ENCODE measurements at regions of chr6 and their contacts with region 1.

Region 1: DNA sequence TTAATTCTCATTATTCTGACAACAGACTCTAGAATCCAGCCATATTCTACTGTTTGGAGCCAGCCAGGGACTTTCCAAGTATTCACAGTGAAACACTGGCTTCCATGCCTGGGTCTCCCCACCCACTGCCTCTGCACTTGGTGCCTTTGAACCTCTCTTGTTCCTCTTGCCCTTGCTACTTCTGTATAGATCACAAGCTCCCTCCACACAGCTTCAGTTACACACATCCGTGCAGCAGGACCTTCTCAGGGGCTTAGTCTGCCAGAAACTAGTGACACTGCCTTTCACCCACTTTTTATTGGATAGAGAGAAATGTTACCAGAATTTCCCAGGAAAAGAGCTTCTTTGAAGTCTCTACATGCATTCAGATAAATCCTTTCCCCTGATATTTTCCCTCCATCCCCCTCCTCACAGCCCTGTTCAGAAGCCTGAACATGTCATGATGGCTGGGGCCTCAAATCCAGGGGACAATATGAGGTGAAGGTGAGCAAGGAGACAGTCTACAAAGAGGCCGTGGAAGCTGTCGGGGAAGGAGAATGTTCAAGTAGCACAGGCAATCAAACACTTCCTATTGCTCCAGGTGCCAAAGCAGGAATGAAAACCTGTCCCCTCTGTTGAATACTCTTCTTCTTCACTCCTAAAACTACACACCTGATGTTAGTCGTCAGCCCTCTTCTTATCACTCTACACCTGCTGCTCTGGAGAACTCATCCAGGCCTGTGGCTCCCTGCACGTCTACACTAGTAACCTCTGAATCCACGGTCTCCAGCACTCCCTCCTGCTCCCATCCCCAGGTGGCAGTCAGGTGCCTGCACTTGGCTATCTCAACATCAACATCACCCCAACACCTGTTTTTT is 20.2 kb upstream of the HLA-DOA start:
- DNase-seq: peak; percentile 94
- ATAC-seq: peak; percentile 89
- H3K4me3 ChIP-seq: peak overlapping the region; percentile 49
- H3K27ac ChIP-seq: peak overlapping the region; percentile 100
- H3K4me1 ChIP-seq: peaks cover 36% of the 10 kb centered on the region
- H3K27me3 ChIP-seq: no peaks in the 10 kb centered on the region
- CTCF ChIP-seq: peak in 2 of 3 experiments; percentile 4 to 22; a peak in 1 of 6 replicates
- EP300 ChIP-seq: peak; percentile 86 to 88
- POLR2A ChIP-seq: peak; percentile 83
- RAD21 ChIP-seq: peak; percentile 31; the same call in 1 of the 2 replicates

Region 2: GRCh38 chr6:33008944-33009861 is 20.4 kb before region 1 on chr6 and contains the start of gene HLA-DOA:
- CTCF ChIA-PET with region 1: interaction called, 165 read pairs
- POLR2A ChIA-PET with region 1: interaction called, 120 read pairs
- RAD21 ChIA-PET with region 1: interaction called, 132 read pairs
- SMC1A ChIA-PET with region 1: interaction called, 157 read pairs
- in situ Hi-C with region 1: no loop called
- intact Hi-C with region 1: no loop called
- DNase-seq: peak; percentile 75
- ATAC-seq: peak; percentile 98
- H3K4me3 ChIP-seq: peak within 1 kb of the TSS; percentile 100
- H3K27ac ChIP-seq: peak within 1 kb of the TSS; percentile 75
- H3K4me1 ChIP-seq: peaks cover 15% of the 10 kb centered on the region
- H3K27me3 ChIP-seq: no peaks in the 10 kb centered on the region
- CTCF ChIP-seq: no peak
- EP300 ChIP-seq: no peak
- POLR2A ChIP-seq: peak; percentile 93
- RAD21 ChIP-seq: no peak
- polyA plus RNA-seq, gene HLA-DOA: 8.8 to 21.1 TPM

Region 3: GRCh38 chr6:33040157-33040556 is 10.6 kb after region 1 on chr6:
- CTCF ChIA-PET with region 1: interaction called, 4 read pairs
- POLR2A ChIA-PET with region 1: interaction called, 12 read pairs
- RAD21 ChIA-PET with region 1: interaction called, 5 read pairs
- SMC1A ChIA-PET with region 1: interaction called, 6 read pairs
- in situ Hi-C with region 1: no loop called
- intact Hi-C with region 1: no loop called
- DNase-seq: peak; percentile 41
- ATAC-seq: peak; percentile 91
- H3K4me3 ChIP-seq: no peak overlapping the region
- H3K27ac ChIP-seq: no peak overlapping the region
- H3K4me1 ChIP-seq: peaks cover 7% of the 10 kb centered on the region; the same call in 1 of the 2 replicates
- H3K27me3 ChIP-seq: no peaks in the 10 kb centered on the region
- CTCF ChIP-seq: no peak
- EP300 ChIP-seq: no peak
- POLR2A ChIP-seq: no peak
- RAD21 ChIP-seq: no peak

Region 4: DNA sequence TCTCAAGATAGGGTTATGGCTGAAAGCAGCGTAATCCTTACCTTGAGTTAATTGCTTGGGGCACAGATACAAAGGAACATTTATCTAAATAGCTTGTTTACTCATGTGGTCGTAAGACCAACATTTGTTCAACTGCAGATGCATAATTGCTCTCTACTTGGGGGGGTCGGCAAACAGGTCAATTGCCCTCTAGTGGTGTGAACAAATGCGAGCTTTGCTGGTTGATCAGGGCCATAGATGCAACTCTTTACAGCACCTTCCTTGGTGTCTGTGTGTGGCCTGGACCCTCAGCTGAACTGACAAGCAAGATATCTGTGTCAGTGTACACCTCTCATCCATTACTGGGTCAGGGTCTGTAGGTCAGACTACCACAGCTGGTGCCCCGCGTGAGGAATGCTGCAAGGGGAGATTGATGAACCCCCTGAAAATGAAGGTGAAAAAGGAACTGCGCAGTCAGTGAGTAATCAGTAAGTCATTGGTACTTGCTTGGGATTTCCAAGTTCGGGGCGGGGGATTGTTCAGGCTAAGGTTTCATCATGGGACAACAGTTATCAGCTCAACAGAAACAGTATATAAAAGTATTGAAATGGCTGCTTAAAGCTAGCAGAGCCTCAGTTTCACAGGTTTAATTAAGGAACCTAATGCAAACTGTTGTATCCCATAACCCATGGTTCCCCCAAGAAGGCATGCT is 19.9 kb after region 1 on chr6:
- CTCF ChIA-PET with region 1: interaction called, 61 read pairs
- POLR2A ChIA-PET with region 1: interaction called, 16 read pairs
- RAD21 ChIA-PET with region 1: interaction called, 14 read pairs
- SMC1A ChIA-PET with region 1: interaction called, 44 read pairs
- in situ Hi-C with region 1: no loop called
- intact Hi-C with region 1: no loop called
- DNase-seq: no peak
- ATAC-seq: peak; percentile 85
- H3K4me3 ChIP-seq: no peak overlapping the region
- H3K27ac ChIP-seq: no peak overlapping the region
- H3K4me1 ChIP-seq: no peaks in the 10 kb centered on the region
- H3K27me3 ChIP-seq: no peaks in the 10 kb centered on the region
- CTCF ChIP-seq: peak; percentile 23 to 54 (median 53)
- EP300 ChIP-seq: no peak
- POLR2A ChIP-seq: no peak
- RAD21 ChIP-seq: peak; percentile 43; the same call in 1 of the 2 replicates

Region 5: GRCh38 chr6:33061987-33062386 is 32.4 kb after region 1 on chr6:
- CTCF ChIA-PET with region 1: interaction called, 4 read pairs
- POLR2A ChIA-PET with region 1: interaction called, 23 read pairs
- RAD21 ChIA-PET with region 1: interaction called, 9 read pairs
- SMC1A ChIA-PET with region 1: interaction called, 5 read pairs
- in situ Hi-C with region 1: no loop called
- intact Hi-C with region 1: no loop called
- DNase-seq: peak; percentile 62
- ATAC-seq: peak; percentile 94
- H3K4me3 ChIP-seq: no peak overlapping the region
- H3K27ac ChIP-seq: peak overlapping the region; percentile 66
- H3K4me1 ChIP-seq: peaks cover 13% of the 10 kb centered on the region
- H3K27me3 ChIP-seq: no peaks in the 10 kb centered on the region
- CTCF ChIP-seq: no peak
- EP300 ChIP-seq: peak in 1 of 2 experiments; percentile 46; a peak in 1 of 4 replicates
- POLR2A ChIP-seq: no peak
- RAD21 ChIP-seq: no peak

Region 6: DNA sequence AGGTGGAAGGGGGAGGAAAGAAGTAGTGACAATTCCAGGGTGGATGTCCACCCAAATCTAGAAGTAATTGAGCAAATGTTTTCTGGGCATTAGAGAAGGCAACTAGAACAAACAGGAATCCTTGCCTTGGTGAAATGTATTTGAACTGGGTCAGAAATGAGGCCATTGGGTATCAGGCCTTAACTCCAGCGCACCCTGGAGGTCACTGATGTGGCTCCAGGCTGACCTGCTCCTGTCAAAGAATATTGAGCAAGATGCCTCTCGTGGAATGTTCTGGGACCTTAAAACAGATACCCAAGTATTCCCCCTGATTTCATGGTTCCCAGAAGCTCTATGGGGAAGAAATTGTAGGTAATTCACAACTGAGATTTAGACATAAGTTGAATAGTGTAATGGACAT is 53.1 kb after region 1 on chr6:
- CTCF ChIA-PET with region 1: interaction called, 8 read pairs
- POLR2A ChIA-PET with region 1: interaction called, 25 read pairs
- RAD21 ChIA-PET with region 1: interaction called, 6 read pairs
- SMC1A ChIA-PET with region 1: interaction called, 17 read pairs
- in situ Hi-C with region 1: no loop called
- intact Hi-C with region 1: no loop called
- DNase-seq: no peak
- ATAC-seq: peak; percentile 72
- H3K4me3 ChIP-seq: no peak overlapping the region
- H3K27ac ChIP-seq: 0 out of 2 replicates have a peak overlapping the region, but pooled peaks have one; percentile 35
- H3K4me1 ChIP-seq: peaks cover 21% of the 10 kb centered on the region
- H3K27me3 ChIP-seq: no peaks in the 10 kb centered on the region
- CTCF ChIP-seq: peak; percentile 70 to 73 (median 72)
- EP300 ChIP-seq: no peak
- POLR2A ChIP-seq: no peak
- RAD21 ChIP-seq: peak; percentile 78

Region 7: DNA sequence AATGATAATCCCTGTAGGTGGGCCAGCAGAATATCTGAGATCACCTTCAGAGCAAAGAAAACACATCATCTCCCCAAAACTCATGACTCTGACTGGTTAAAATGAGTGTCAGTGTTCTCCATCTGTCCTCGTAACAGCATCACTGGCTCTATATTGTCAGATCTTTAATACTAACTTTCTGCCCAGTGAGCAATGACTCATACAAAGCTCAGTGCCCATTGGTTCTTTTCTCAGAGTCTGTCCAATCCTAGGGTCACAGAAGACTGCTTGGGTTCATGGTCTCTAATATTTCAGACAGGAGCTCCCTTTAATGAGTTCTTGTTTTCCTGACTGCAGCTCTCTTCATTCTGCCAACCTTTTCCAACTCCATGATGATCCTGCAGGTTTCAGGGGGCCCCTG is 82.6 kb after region 1 on chr6:
- CTCF ChIA-PET with region 1: interaction called, 8 read pairs
- POLR2A ChIA-PET with region 1: interaction called, 9 read pairs
- RAD21 ChIA-PET with region 1: interaction called, 17 read pairs
- SMC1A ChIA-PET with region 1: interaction called, 7 read pairs
- in situ Hi-C with region 1: no loop called
- intact Hi-C with region 1: no loop called
- DNase-seq: peak; percentile 68
- ATAC-seq: peak; percentile 97
- H3K4me3 ChIP-seq: no peak overlapping the region
- H3K27ac ChIP-seq: peak overlapping the region; percentile 41
- H3K4me1 ChIP-seq: peaks cover 40% of the 10 kb centered on the region
- H3K27me3 ChIP-seq: no peaks in the 10 kb centered on the region; a peak in 2 of 4 replicates
- CTCF ChIP-seq: no peak
- EP300 ChIP-seq: no peak
- POLR2A ChIP-seq: no peak
- RAD21 ChIP-seq: no peak

Measured in GM12878 (cell line).